Lower leg skin (tissue), 4 donors: ENCODE measurements at regions of chrX and their contacts with region 1.

Region 1: GRCh38 chrX:109077788-109078187 is 341.4 kb upstream of the IRS4 start:
- DNase-seq: no peak
- H3K4me3 ChIP-seq: no peak overlapping the region
- CTCF ChIP-seq: no peak
- POLR2A ChIP-seq: no peak

Region 2: DNA sequence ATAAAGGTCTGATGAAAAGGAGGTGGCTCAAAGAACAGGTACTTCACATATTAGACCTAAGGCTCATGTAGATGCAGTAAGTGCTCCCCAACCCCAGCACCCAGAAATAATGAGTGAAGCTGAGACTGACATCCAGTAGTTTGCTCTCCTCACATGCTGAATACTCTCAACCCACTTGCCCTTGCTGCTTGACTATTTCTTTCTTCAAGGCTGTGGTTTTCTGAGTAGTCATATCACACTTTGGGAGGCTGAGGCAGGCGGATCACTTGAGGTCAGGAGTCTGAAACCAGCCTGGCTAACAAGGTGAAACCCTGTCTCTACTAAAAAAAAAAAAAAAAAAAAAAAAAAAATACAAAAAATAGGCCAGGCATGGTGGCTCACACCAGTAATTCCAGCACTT is 1500.9 kb before region 1 on chrX:
- intact Hi-C with region 1: loop called (anchors 5 kb)
- DNase-seq: no peak
- H3K4me3 ChIP-seq: no peak overlapping the region
- CTCF ChIP-seq: no peak
- POLR2A ChIP-seq: no peak